ENCODE measurements at regions of chr19 and their contacts with region 1.

Region 1: DNA sequence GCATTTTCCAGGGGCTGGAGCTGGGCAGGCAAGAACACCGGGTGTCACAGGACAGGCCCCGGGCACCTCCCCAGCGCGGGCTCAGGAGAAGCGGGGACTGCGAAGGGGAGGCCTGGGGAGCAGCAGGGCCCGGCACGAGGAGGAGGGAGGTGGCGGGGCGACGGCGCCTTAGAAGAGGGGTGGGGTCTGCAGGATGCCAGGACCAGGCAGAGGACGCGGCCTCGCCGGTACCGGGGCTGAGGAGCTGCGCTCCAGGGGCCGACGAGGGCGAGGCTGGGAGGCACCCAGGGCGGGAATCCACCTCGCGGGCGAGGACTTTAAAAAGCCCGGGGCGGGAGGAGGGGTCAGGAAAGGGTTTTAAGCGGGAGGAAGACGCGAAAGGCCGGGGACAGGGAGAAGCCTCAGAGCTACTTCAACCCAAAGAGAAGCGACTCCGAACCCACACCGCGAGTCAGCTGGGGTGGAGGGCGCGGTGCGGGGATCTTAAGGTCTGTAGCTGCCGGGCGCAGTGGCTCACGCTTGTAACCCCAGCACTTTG is 665 bp downstream of the ZNF347 start:
- DNase-seq: peak; percentile 66
- H3K4me3 ChIP-seq: peak overlapping the region; percentile 61 to 71 (median 68)
- H3K27ac ChIP-seq: peak overlapping the region; percentile 68 to 82 (median 76)
- H3K4me1 ChIP-seq: peaks cover 0 to 21% (median 16%) of the 10 kb centered on the region in 4 donors
- H3K27me3 ChIP-seq: no peaks in the 10 kb centered on the region
- CTCF ChIP-seq: no peak
- EP300 ChIP-seq: no peak
- POLR2A ChIP-seq: no peak

Region 2: GRCh38 chr19:53132141-53132991 is 25.8 kb before region 1 on chr19 and contains the start of gene ZNF415:
- intact Hi-C with region 1: loop called (anchors 2 kb)
- DNase-seq: peak; percentile 88
- H3K4me3 ChIP-seq: peak within 1 kb of the TSS; percentile 47 to 84 (median 72)
- H3K27ac ChIP-seq: peak within 1 kb of the TSS; percentile 76 to 83 (median 80)
- H3K4me1 ChIP-seq: peaks cover 0 to 26% (median 14%) of the 10 kb centered on the region in 4 donors
- H3K27me3 ChIP-seq: no peaks in the 10 kb centered on the region
- CTCF ChIP-seq: no peak
- EP300 ChIP-seq: no peak
- POLR2A ChIP-seq: peak; percentile 21 to 27
- total RNA-seq, gene ZNF415: 10.7 to 16.9 (median 13.0) TPM

Region 3: GRCh38 chr19:53294786-53295441 is 136.7 kb after region 1 on chr19:
- intact Hi-C with region 1: no loop called
- DNase-seq: no peak
- H3K4me3 ChIP-seq: no peak overlapping the region
- H3K27ac ChIP-seq: no peak overlapping the region
- H3K4me1 ChIP-seq: no peaks in the 10 kb centered on the region
- H3K27me3 ChIP-seq: no peaks in the 10 kb centered on the region
- CTCF ChIP-seq: no peak
- EP300 ChIP-seq: no peak
- POLR2A ChIP-seq: no peak

Measured in sigmoid colon (tissue), 7 donors.